Heart right ventricle (tissue), 16 donors: ENCODE measurements at regions of chrX and their contacts with region 1.

Region 1: GRCh38 chrX:140071037-140071436 is 105.7 kb upstream of the CXorf66 start:
- DNase-seq: no peak
- ATAC-seq: no peak
- H3K4me3 ChIP-seq: no peak overlapping the region
- H3K27ac ChIP-seq: no peak overlapping the region
- H3K4me1 ChIP-seq: no peaks in the 10 kb centered on the region
- H3K27me3 ChIP-seq: no peaks in the 10 kb centered on the region
- CTCF ChIP-seq: no peak

Region 2: DNA sequence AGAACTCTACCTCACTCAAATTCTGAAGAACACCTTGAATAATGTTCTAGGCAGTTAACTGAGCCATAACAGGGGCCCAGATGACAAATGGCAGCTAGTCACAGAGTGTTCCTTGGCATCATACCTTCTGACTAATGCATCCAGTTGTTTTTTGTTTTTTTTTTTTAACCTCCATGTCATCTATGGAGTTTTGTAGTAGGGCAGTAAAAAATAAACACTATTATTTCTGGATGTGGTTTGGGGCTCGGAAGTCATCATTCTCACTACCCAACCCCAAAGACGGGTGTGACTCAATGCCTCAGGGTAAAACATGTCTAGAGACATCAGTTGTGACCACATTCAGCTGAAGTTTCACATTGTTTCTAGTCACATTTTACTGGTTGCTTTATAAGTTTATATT is 331.9 kb before region 1 on chrX:
- intact Hi-C with region 1: no loop called
- DNase-seq: no peak
- ATAC-seq: no peak
- H3K4me3 ChIP-seq: no peak overlapping the region
- H3K27ac ChIP-seq: no peak overlapping the region
- H3K4me1 ChIP-seq: no peaks in the 10 kb centered on the region
- H3K27me3 ChIP-seq: peaks cover 0 to 11% (median 0%) of the 10 kb centered on the region in 7 donors
- CTCF ChIP-seq: no peak

Region 3: GRCh38 chrX:140141444-140142029 is 70.5 kb after region 1 on chrX:
- intact Hi-C with region 1: loop called in 2 of 10 experiments (anchors 2 kb)
- DNase-seq: no peak
- ATAC-seq: no peak
- H3K4me3 ChIP-seq: no peak overlapping the region
- H3K27ac ChIP-seq: no peak overlapping the region
- H3K4me1 ChIP-seq: no peaks in the 10 kb centered on the region
- H3K27me3 ChIP-seq: peaks cover 0 to 17% (median 0%) of the 10 kb centered on the region in 7 donors
- CTCF ChIP-seq: peak; percentile 7 to 73 (median 57)